A673 (cell line): ENCODE measurements at regions of chr2 and their contacts with region 1.

Region 1: GRCh38 chr2:167406558-167406957 is 518.3 kb downstream of the XIRP2 start:
- DNase-seq: peak; percentile 95
- H3K4me3 ChIP-seq: peak overlapping the region; percentile 29
- H3K27ac ChIP-seq: peak overlapping the region; percentile 71
- H3K4me1 ChIP-seq: peaks cover 20% of the 10 kb centered on the region
- H3K27me3 ChIP-seq: no peaks in the 10 kb centered on the region
- CTCF ChIP-seq: no peak

Region 2: DNA sequence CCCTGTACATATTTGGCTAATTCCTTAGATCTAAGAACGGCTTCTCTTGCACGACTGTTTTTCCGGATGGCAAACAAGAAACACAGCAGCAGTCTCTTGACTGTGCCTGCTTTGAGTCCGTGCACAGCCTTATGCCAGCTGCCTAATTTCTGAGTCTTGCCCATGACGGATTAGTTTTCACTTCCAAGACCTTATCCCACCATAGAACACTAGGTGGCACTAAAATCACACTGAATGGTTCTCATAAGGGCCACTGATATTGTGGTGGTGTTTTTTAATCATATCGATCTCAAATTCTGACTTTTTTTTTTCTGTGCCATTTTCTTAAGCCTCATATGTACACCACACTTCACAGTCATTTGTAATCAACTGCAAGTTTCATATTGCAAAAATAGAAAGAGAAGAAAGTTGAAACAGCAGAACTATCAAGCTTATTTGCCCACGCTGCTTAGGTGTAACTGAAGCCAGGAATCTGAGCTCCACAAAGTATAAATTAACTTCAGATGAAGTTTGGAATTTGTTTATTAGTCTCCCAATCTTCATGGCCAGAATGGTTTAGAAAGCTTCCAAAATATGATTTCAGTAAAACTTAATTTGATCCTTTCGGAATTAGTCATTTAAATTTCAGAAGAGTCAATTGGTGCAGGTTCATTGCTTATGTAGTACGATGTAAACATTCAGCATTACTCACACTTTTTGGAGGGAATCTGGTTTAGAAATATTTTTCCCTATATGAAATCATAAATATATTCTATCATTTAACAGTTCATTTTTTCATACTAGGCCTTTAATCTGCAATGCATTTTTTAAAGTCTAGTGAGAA is 867.0 kb before region 1 on chr2:
- CTCF ChIA-PET with region 1: no interaction called
- POLR2A ChIA-PET with region 1: no interaction called
- intact Hi-C with region 1: loop called (anchors 10 kb)
- DNase-seq: peak; percentile 84
- H3K4me3 ChIP-seq: no peak overlapping the region
- H3K27ac ChIP-seq: no peak overlapping the region
- H3K4me1 ChIP-seq: no peaks in the 10 kb centered on the region
- H3K27me3 ChIP-seq: no peaks in the 10 kb centered on the region
- CTCF ChIP-seq: peak; percentile 86

Region 3: GRCh38 chr2:167264380-167264779 is 142.2 kb before region 1 on chr2:
- CTCF ChIA-PET with region 1: no interaction called
- POLR2A ChIA-PET with region 1: no interaction called
- intact Hi-C with region 1: loop called (anchors 2 kb)
- DNase-seq: peak; percentile 49
- H3K4me3 ChIP-seq: no peak overlapping the region
- H3K27ac ChIP-seq: no peak overlapping the region
- H3K4me1 ChIP-seq: no peaks in the 10 kb centered on the region
- H3K27me3 ChIP-seq: no peaks in the 10 kb centered on the region
- CTCF ChIP-seq: peak; percentile 68

Region 4: GRCh38 chr2:167292430-167293171 is 114.0 kb before region 1 on chr2:
- CTCF ChIA-PET with region 1: no interaction called
- POLR2A ChIA-PET with region 1: no interaction called
- intact Hi-C with region 1: loop called (anchors 1 kb)
- DNase-seq: peak; percentile 96
- H3K4me3 ChIP-seq: peak within 1 kb of the TSS; percentile 72
- H3K27ac ChIP-seq: peak within 1 kb of the TSS; percentile 82
- H3K4me1 ChIP-seq: peaks cover 15% of the 10 kb centered on the region
- H3K27me3 ChIP-seq: no peaks in the 10 kb centered on the region
- CTCF ChIP-seq: peak; percentile 55

Region 5: DNA sequence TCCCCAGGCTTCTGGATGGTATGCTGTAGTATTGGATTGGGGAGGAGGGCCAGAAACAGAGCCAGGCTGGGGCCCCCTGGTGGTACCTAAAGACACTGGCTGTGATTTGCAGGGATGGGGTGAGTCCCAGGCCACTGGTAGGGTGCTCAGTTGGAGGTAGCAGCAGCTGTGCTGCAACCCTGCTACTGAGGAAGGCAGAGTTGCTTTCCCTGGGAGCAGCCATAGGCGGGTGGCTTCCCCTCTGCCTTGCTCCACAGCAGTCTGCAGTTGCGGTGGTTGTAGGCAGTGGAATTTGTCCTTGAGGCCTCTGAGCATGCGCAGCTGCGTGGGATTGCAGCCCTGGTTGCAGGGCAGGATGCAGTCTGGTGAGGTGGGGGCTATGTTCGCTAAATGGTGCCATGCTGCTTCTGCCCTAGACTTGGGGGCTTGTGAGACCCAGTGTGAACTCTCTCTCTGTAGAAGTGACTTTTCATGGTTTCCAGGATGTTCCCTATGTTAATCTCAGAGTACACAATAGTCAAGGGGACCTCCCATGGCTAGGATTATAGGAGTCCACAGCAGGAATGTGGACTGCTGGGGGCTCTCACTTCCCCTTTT is 74.8 kb before region 1 on chr2:
- CTCF ChIA-PET with region 1: no interaction called
- POLR2A ChIA-PET with region 1: no interaction called
- intact Hi-C with region 1: no loop called
- DNase-seq: peak; percentile 76
- H3K4me3 ChIP-seq: no peak overlapping the region
- H3K27ac ChIP-seq: peak overlapping the region; percentile 70
- H3K4me1 ChIP-seq: peaks cover 36% of the 10 kb centered on the region
- H3K27me3 ChIP-seq: no peaks in the 10 kb centered on the region
- CTCF ChIP-seq: peak; percentile 58